ENCODE measurements at regions of chr1 and their contacts with region 1.

Region 1: GRCh38 chr1:149962123-149962548 is 25.5 kb upstream of the MTMR11 start:
- DNase-seq: peak; percentile 76 to 85 (median 85)
- H3K4me3 ChIP-seq: no peak overlapping the region
- H3K27ac ChIP-seq: no peak overlapping the region
- H3K4me1 ChIP-seq: peaks cover 0 to 4% (median 0%) of the 10 kb centered on the region in 4 experiments
- H3K27me3 ChIP-seq: no peaks in the 10 kb centered on the region

Region 2: GRCh38 chr1:149903836-149904491 is 58.2 kb before region 1 on chr1:
- CTCF ChIA-PET with region 1: no interaction called
- POLR2A ChIA-PET with region 1: no interaction called
- DNase-seq: no peak
- H3K4me3 ChIP-seq: no peak overlapping the region
- H3K27ac ChIP-seq: no peak overlapping the region
- H3K4me1 ChIP-seq: peaks cover 0 to 14% (median 13%) of the 10 kb centered on the region in 4 experiments
- H3K27me3 ChIP-seq: no peaks in the 10 kb centered on the region

Region 3: GRCh38 chr1:150051089-150051373 is 88.9 kb after region 1 on chr1:
- CTCF ChIA-PET with region 1: interaction called, 14 read pairs
- POLR2A ChIA-PET with region 1: no interaction called
- DNase-seq: no peak
- H3K4me3 ChIP-seq: no peak overlapping the region
- H3K27ac ChIP-seq: no peak overlapping the region
- H3K4me1 ChIP-seq: peaks cover 0 to 18% (median 7%) of the 10 kb centered on the region in 4 experiments
- H3K27me3 ChIP-seq: no peaks in the 10 kb centered on the region

Region 4: DNA sequence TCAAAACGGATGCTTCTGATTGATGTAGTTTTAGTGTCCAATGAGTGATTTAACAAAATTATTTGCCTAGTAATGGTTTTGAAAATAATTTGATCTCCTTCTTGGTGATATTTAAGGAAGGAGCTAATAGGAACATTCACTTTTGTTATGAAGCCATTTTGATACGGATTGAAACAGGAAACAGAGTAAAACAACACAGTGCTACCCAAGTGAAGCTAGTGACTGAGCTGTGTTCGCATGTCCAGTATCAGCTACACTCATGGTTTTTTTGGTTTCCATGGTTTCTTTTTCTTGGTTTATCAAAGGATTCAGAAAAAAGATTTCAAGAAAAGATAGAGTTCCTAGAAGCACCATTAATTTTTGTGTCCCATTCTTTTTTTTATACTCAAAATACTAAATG is 147.4 kb after region 1 on chr1:
- CTCF ChIA-PET with region 1: no interaction called
- POLR2A ChIA-PET with region 1: no interaction called
- DNase-seq: peak in 1 of 3 donors; percentile 35
- H3K4me3 ChIP-seq: peak overlapping the region in 2 of 7 experiments; percentile 4 to 54
- H3K27ac ChIP-seq: no peak overlapping the region
- H3K4me1 ChIP-seq: peaks cover 3 to 21% (median 15%) of the 10 kb centered on the region in 4 experiments
- H3K27me3 ChIP-seq: no peaks in the 10 kb centered on the region

Region 5: GRCh38 chr1:150186789-150187559 is 224.8 kb after region 1 on chr1:
- CTCF ChIA-PET with region 1: interaction called, 12 read pairs
- POLR2A ChIA-PET with region 1: no interaction called
- DNase-seq: peak; percentile 83 to 90 (median 88)
- H3K4me3 ChIP-seq: peak overlapping the region in 6 of 7 experiments; percentile 2 to 80 (median 56)
- H3K27ac ChIP-seq: peak overlapping the region; percentile 30 to 88
- H3K4me1 ChIP-seq: peaks cover 2 to 12% (median 9%) of the 10 kb centered on the region in 4 experiments
- H3K27me3 ChIP-seq: no peaks in the 10 kb centered on the region

Measured in common myeloid progenitor, CD34-positive (primary cell).